SK-N-SH (cell line): ENCODE measurements at regions of chr3 and their contacts with region 1.

Region 1: DNA sequence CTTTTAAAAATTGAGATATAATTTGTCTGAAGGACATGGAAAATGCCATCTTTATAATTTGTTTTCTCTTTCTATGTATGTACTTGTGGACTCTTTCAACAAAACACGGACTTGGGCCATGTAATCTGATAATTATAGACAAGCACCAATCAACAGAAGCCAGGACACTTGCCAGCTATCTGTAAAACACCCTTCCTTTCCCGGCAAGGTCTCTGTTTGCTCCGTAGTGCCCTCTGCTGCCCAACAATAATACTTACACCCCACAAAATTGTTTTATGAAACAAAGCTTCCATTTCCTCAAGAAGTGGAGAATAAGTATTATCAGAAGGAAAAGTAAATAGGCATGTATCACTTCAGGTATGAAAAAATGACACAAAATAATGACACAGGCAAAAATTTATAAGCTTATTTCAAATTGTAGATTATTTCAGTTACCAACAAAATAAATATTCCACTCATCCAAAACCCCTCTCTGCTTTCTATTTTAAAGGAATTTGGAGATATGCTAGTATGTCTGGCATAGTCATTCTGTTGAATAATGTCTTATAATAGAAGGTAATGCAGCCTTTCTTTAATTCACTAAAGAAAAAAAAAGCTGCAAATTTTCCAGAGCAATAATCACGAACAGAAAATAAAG is 32.8 kb downstream of the MYH15 start:
- DNase-seq: peak; percentile 38
- H3K4me3 ChIP-seq: no peak overlapping the region
- H3K27ac ChIP-seq: no peak overlapping the region
- H3K4me1 ChIP-seq: peaks cover 0 to 3% of the 10 kb centered on the region in 2 experiments; a peak in 2 of 4 replicates
- H3K27me3 ChIP-seq: no peaks in the 10 kb centered on the region
- CTCF ChIP-seq: peak; percentile 85
- EP300 ChIP-seq: no peak
- RAD21 ChIP-seq: peak; percentile 84

Region 2: DNA sequence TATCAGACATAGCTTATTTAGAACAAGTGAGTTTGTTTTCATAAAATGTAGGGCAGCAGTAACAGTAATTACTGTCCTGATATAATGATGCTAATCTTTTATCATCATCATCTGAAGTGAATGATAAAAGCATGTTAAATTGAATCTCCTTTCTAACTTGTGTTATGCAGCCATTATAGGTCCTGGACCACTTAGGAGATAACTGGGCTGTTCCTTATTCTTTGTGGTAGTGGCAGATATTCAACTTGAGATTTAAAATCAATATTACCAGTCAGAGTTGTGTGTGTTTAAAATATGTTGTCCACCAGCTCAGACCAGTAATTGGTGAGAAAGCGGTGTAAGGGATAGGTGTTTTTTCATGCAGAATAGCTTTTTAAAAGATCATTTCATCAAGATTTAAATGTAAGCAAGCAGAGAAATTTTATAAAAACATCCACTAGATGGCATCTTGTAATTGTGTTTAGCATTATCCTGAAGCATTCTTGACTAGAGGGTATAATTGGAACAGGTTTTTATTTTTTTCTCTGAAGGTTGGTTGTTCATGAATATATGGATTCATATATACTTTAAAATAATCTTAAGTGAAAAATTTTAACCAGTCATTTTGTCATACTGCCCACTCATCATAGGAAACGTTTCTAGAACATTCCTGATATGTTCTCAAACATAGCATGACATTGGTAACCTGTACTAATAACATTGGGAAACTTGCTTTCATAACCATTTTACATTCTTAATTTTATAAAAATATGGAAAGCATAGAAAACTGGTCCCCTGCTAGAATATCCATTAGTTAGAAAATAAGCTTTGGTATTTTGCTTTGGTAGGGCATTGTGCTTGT is 800.9 kb before region 1 on chr3:
- CTCF ChIA-PET with region 1: interaction called, 17 read pairs
- POLR2A ChIA-PET with region 1: no interaction called
- DNase-seq: peak; percentile 29
- H3K4me3 ChIP-seq: no peak overlapping the region; a peak in 1 of 4 replicates
- H3K27ac ChIP-seq: no peak overlapping the region
- H3K4me1 ChIP-seq: no peaks in the 10 kb centered on the region; a peak in 2 of 4 replicates
- H3K27me3 ChIP-seq: no peaks in the 10 kb centered on the region
- CTCF ChIP-seq: peak; percentile 74
- EP300 ChIP-seq: no peak
- RAD21 ChIP-seq: peak; percentile 64

Region 3: GRCh38 chr3:108159865-108160264 is 317.8 kb before region 1 on chr3:
- CTCF ChIA-PET with region 1: interaction called, 25 read pairs
- POLR2A ChIA-PET with region 1: no interaction called
- DNase-seq: no peak
- H3K4me3 ChIP-seq: no peak overlapping the region
- H3K27ac ChIP-seq: no peak overlapping the region
- H3K4me1 ChIP-seq: peaks cover 0 to 7% of the 10 kb centered on the region in 2 experiments; a peak in 1 of 4 replicates
- H3K27me3 ChIP-seq: no peaks in the 10 kb centered on the region
- CTCF ChIP-seq: no peak
- EP300 ChIP-seq: no peak
- RAD21 ChIP-seq: no peak

Region 4: DNA sequence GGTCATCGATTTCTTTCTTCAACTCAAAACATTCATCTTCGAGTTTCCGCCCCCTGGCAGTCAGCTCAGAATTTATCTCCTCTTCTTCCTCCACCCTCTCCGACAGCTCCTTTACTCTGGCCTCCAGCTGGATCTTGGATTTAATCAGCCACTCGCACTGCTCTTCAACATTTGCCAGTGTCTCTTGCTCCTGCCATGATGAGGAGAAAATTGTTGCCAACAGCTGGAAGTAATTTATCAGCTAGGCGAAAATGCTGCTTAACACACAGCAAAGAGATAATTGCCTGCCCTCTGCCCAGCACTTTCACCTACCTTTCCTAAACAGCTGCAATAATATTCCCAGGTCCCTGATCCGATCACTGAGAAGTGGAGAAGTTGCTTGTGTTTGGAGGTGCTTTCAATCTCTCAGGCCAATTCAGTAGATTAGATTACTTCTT is 36.5 kb before region 1 on chr3:
- CTCF ChIA-PET with region 1: interaction called, 35 read pairs
- POLR2A ChIA-PET with region 1: no interaction called
- DNase-seq: peak; percentile 39
- H3K4me3 ChIP-seq: no peak overlapping the region
- H3K27ac ChIP-seq: peak overlapping the region; percentile 25 to 97; a peak in 3 of 4 replicates
- H3K4me1 ChIP-seq: peaks cover 13 to 24% of the 10 kb centered on the region in 2 experiments; a peak in 3 of 4 replicates
- H3K27me3 ChIP-seq: no peaks in the 10 kb centered on the region
- CTCF ChIP-seq: no peak
- EP300 ChIP-seq: no peak; a peak in 2 of 4 replicates
- RAD21 ChIP-seq: peak; percentile 28; the same call in 1 of the 2 replicates

Region 5: GRCh38 chr3:108459225-108459624 is 18.4 kb before region 1 on chr3:
- CTCF ChIA-PET with region 1: interaction called, 19 read pairs
- POLR2A ChIA-PET with region 1: no interaction called
- DNase-seq: no peak
- H3K4me3 ChIP-seq: no peak overlapping the region
- H3K27ac ChIP-seq: no peak overlapping the region
- H3K4me1 ChIP-seq: peaks cover 0 to 9% of the 10 kb centered on the region in 2 experiments; a peak in 2 of 4 replicates
- H3K27me3 ChIP-seq: no peaks in the 10 kb centered on the region
- CTCF ChIP-seq: no peak
- EP300 ChIP-seq: no peak
- RAD21 ChIP-seq: no peak

Region 6: GRCh38 chr3:108552267-108553159 is 74.9 kb after region 1 on chr3:
- CTCF ChIA-PET with region 1: interaction called, 17 read pairs
- POLR2A ChIA-PET with region 1: no interaction called
- DNase-seq: peak; percentile 11
- H3K4me3 ChIP-seq: no peak overlapping the region; a peak in 1 of 4 replicates
- H3K27ac ChIP-seq: peak overlapping the region; percentile 23 to 34; a peak in 1 of 4 replicates
- H3K4me1 ChIP-seq: no peaks in the 10 kb centered on the region; a peak in 1 of 4 replicates
- H3K27me3 ChIP-seq: no peaks in the 10 kb centered on the region
- CTCF ChIP-seq: peak; percentile 69
- EP300 ChIP-seq: no peak
- RAD21 ChIP-seq: peak; percentile 81